Mucosa of descending colon (tissue), 3 donors: ENCODE measurements at regions of chr12 and their contacts with region 1.

Region 1: DNA sequence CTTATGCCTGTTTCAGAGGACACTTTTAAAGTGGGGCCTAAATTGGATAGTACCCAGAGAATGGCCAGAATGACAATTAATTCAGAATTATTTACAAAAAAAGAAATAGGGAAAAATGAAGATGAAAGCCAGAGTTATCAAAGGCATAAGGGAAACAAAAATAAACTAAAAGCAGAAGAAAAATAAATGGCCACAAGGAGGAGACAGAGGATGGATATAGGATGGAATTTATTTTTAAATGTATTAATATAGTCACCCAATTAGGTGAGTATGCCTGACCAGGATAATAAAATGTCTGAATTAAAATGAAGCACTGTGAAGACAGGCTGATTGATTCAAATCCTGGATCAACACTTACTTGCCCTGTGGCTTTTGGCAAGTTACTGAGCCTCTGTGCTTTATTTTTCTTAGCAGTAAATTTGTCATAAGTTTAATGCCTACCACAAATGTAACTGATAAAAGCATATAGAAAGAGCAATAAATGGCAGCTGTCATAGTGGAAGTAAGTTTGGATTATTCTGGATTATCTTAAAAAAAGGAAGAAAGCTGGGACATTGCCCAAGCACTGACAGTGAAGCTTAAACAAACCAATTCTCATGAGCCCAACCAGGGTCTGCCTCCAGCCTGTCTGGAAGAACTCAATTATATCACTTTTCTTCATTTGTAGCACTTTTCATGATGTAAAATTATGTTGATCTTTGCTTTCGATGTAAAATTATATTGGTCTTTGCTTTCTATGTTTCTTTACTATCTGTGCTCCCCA is 3.5 kb downstream of the CLEC9A start:
- DNase-seq: no peak
- ATAC-seq: no peak
- H3K4me3 ChIP-seq: no peak overlapping the region
- H3K4me1 ChIP-seq: no peaks in the 10 kb centered on the region
- CTCF ChIP-seq: no peak

Region 2: DNA sequence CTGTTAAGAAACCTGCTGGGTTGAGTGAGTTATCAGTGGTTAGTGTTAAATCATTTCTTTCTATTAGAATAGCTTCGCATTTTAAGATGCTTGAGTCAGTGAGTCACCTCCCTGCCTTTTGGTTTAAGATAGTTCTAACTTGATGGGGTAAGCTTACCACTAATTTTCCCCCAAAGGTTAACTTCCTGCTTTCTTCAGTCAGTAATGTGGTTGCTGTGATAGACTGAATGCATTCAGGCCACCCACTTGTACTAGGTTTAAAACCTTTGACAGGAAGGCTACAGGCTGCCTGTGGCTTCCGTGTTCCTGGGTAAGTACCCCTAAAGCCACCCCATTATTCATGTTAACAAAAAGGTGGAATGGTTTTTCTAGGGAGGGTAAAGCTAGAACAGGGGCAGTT is 127.1 kb before region 1 on chr12:
- intact Hi-C with region 1: no loop called
- DNase-seq: peak in 1 of 3 donors; percentile 7
- ATAC-seq: peak; percentile 74
- H3K4me3 ChIP-seq: no peak overlapping the region
- H3K4me1 ChIP-seq: no peaks in the 10 kb centered on the region
- CTCF ChIP-seq: no peak

Region 3: GRCh38 chr12:10140001-10140400 is 106.0 kb after region 1 on chr12:
- intact Hi-C with region 1: loop called in 1 of 2 experiments (anchors 5 kb)
- DNase-seq: peak in 1 of 3 donors; percentile 30
- ATAC-seq: no peak
- H3K4me3 ChIP-seq: no peak overlapping the region
- H3K4me1 ChIP-seq: no peaks in the 10 kb centered on the region
- CTCF ChIP-seq: no peak